Sigmoid colon (tissue), 7 donors: ENCODE measurements at regions of chr17 and their contacts with region 1.

Region 1: DNA sequence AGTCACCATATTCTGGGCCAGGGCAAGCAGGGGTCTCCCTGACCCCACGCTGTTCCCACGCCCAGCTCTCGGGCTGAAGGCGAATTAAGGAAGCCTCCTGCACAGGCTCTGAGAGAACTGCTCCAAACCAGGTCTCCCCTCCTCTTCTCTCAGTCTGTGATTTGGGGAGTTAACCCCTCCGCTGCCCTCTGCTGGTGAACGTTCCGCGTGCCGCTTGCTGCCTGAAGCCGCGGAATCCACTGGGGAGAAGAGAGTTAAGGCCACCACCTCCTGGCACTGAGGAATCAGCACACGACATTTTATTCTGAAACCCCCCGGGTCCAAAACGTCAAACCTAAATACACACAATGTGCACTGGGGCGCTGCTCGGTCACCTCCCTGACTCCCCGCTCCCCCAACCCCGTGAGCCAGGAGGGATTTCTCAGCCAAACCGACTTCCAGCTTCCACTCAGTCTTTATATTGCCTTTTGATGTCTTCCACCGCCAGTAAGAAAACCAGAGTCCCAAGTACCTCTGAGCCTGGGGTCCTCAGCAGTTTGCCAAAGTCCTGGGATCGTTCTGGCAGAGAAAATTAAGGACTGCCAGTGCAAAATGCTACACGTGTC is 54.4 kb upstream of the RCVRN start:
- DNase-seq: no peak
- H3K4me3 ChIP-seq: no peak overlapping the region
- H3K27ac ChIP-seq: no peak overlapping the region
- H3K4me1 ChIP-seq: peaks cover 0 to 15% (median 14%) of the 10 kb centered on the region in 4 donors
- H3K27me3 ChIP-seq: peaks cover 6 to 40% (median 21%) of the 10 kb centered on the region in 3 donors
- CTCF ChIP-seq: peak in 2 of 4 experiments; percentile 19 to 21
- EP300 ChIP-seq: no peak
- POLR2A ChIP-seq: no peak

Region 2: GRCh38 chr17:9937241-9937761 is 22.2 kb before region 1 on chr17:
- intact Hi-C with region 1: no loop called
- DNase-seq: peak; percentile 83
- H3K4me3 ChIP-seq: no peak overlapping the region
- H3K27ac ChIP-seq: peak overlapping the region in 3 of 4 donors; percentile 12 to 35 (median 28)
- H3K4me1 ChIP-seq: peaks cover 0 to 9% (median 8%) of the 10 kb centered on the region in 4 donors
- H3K27me3 ChIP-seq: no peaks in the 10 kb centered on the region
- CTCF ChIP-seq: no peak
- EP300 ChIP-seq: no peak
- POLR2A ChIP-seq: no peak

Region 3: DNA sequence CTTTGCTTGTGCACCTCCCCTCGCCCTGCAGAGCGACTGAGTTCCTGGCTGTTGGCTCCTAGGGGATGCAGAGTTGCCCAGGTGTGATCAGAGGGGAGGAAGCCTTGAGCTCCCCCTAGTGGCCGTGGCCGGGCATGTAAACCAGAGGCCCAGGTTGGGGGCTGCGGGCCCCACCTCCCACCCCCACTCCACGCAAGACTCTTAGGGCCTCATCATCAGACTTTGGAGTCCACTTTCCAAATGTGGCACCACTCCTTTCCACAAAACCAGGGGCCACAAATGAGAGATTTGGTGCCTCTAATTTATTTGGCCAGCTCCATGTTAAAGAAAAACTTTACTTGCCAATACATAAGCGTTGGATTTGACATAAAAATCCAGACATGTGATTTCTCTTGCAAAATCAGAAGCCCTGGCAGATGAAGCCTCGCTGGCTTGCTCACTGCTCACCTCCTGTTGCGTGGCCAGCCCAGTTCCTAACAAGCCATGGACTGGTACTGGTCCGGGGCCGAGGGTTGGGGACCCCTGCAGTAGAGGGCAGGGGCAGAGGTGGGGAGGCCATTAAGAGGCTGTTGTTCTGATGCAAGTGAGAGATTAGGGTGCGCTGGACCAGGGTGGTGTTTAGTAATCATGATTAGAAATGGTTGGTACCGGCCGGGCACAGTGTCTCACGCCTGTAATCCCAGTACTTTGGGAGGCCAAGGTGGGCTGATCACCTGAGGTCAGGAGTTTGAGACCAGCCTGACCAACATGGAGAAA is 267.6 kb after region 1 on chr17:
- intact Hi-C with region 1: loop called (anchors 2 kb)
- DNase-seq: no peak
- H3K4me3 ChIP-seq: no peak overlapping the region
- H3K27ac ChIP-seq: no peak overlapping the region
- H3K4me1 ChIP-seq: no peaks in the 10 kb centered on the region
- H3K27me3 ChIP-seq: no peaks in the 10 kb centered on the region
- CTCF ChIP-seq: peak in 3 of 4 experiments; percentile 65 to 83 (median 80)
- EP300 ChIP-seq: no peak
- POLR2A ChIP-seq: no peak